Gastrocnemius medialis (tissue), 4 donors: ENCODE measurements at regions of chr2 and their contacts with region 1.

Region 1: DNA sequence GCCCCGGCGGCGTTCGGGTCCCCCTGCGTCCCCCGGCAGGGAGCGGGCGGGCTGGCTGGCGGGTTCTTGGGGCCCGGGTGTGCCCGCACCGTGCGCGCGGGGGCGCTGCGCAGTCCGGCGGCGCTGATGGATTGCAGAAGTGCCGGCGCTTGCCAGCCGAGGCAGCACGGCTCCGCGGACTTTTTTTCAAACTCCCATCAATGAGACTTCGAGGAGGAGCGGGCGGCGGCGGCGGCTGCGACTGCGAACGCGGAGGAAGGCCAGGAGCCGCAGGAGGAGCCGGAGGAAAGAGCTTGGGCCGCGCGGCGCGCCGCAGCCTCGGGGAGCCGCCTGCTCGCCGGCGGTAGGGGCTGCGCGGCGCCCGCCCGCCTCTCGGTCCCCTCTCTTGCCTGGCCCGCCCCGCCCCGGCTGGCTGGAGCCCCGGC is at the start of gene GLI2:
- DNase-seq: peak; percentile 44 to 51
- ATAC-seq: peak; percentile 78 to 82
- H3K4me3 ChIP-seq: peak within 1 kb of the TSS; percentile 51 to 60 (median 56)
- H3K27ac ChIP-seq: peak within 1 kb of the TSS; percentile 51 to 66 (median 60)
- H3K4me1 ChIP-seq: peaks cover 0 to 22% of the 10 kb centered on the region in 2 donors
- H3K27me3 ChIP-seq: peaks cover 54 to 56% (median 56%) of the 10 kb centered on the region in 3 donors
- CTCF ChIP-seq: peak; percentile 18 to 74 (median 51)
- POLR2A ChIP-seq: no peak
- total RNA-seq, gene GLI2: 0.27 to 0.49 (median 0.29) TPM

Region 2: GRCh38 chr2:118748245-118748885 is 1987.4 kb before region 1 on chr2:
- in situ Hi-C with region 1: no loop called
- intact Hi-C with region 1: loop called (anchors 10 kb)
- DNase-seq: no peak
- ATAC-seq: no peak
- H3K4me3 ChIP-seq: no peak overlapping the region
- H3K27ac ChIP-seq: no peak overlapping the region
- H3K4me1 ChIP-seq: no peaks in the 10 kb centered on the region
- H3K27me3 ChIP-seq: no peaks in the 10 kb centered on the region
- CTCF ChIP-seq: no peak
- POLR2A ChIP-seq: no peak

Region 3: DNA sequence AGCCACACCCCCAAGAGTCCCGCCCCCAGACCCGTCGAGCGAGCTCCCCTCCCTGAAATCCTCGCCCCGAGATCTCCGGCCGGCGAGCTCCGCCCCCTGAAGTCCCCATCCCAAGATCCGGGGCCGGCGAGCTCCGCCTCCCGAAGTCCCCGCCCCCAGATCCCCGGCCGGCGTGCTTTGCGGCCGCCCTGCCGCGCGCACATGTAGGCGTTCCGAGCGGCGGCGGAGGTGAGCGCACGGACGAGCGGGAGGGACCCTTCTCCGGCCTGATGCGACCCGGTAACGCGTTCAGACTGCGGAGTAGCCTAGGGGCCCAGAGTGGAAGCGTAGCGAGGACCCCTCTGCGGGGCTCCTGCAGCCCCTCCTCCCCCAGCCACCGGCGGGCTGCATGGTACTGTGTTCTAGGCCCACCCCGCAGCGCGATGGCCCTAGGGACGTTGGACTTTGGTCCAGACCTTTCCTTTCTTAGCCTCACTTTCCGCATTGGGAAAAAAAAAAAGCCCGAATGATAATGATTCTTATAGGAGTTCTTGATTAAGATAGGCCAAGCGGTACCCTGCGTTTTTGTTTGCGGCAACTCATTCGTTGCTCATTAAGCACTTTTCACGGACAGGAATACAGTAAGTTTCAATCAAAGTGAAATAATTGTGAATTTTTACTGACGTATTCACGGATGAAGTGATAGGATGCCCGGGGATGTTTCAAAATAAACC is 1056.6 kb before region 1 on chr2 and contains the start of gene TMEM177:
- in situ Hi-C with region 1: no loop called
- intact Hi-C with region 1: no loop called
- DNase-seq: peak; percentile 62 to 69
- ATAC-seq: peak; percentile 88 to 90
- H3K4me3 ChIP-seq: peak within 1 kb of the TSS; percentile 71 to 98 (median 91)
- H3K27ac ChIP-seq: peak within 1 kb of the TSS; percentile 39 to 80 (median 64)
- H3K4me1 ChIP-seq: peaks cover 7 to 8% of the 10 kb centered on the region in 2 donors
- H3K27me3 ChIP-seq: no peaks in the 10 kb centered on the region
- CTCF ChIP-seq: no peak
- POLR2A ChIP-seq: peak; percentile 30 to 49
- total RNA-seq, gene TMEM177: 5.1 to 13.4 (median 7.6) TPM

Region 4: GRCh38 chr2:120661551-120661950 is 74.2 kb before region 1 on chr2:
- in situ Hi-C with region 1: no loop called
- intact Hi-C with region 1: no loop called
- DNase-seq: peak in 1 of 2 donors; percentile 31
- ATAC-seq: no peak
- H3K4me3 ChIP-seq: no peak overlapping the region
- H3K27ac ChIP-seq: no peak overlapping the region
- H3K4me1 ChIP-seq: peaks cover 0 to 6% of the 10 kb centered on the region in 2 donors
- H3K27me3 ChIP-seq: peaks cover 0 to 6% (median 0%) of the 10 kb centered on the region in 3 donors
- CTCF ChIP-seq: no peak
- POLR2A ChIP-seq: no peak

Region 5: GRCh38 chr2:120802158-120802557 is 66.4 kb after region 1 on chr2:
- in situ Hi-C with region 1: no loop called
- intact Hi-C with region 1: no loop called
- DNase-seq: no peak
- ATAC-seq: no peak
- H3K4me3 ChIP-seq: no peak overlapping the region
- H3K27ac ChIP-seq: no peak overlapping the region
- H3K4me1 ChIP-seq: peaks cover 7 to 15% of the 10 kb centered on the region in 2 donors
- H3K27me3 ChIP-seq: no peaks in the 10 kb centered on the region
- CTCF ChIP-seq: no peak
- POLR2A ChIP-seq: no peak

Region 6: DNA sequence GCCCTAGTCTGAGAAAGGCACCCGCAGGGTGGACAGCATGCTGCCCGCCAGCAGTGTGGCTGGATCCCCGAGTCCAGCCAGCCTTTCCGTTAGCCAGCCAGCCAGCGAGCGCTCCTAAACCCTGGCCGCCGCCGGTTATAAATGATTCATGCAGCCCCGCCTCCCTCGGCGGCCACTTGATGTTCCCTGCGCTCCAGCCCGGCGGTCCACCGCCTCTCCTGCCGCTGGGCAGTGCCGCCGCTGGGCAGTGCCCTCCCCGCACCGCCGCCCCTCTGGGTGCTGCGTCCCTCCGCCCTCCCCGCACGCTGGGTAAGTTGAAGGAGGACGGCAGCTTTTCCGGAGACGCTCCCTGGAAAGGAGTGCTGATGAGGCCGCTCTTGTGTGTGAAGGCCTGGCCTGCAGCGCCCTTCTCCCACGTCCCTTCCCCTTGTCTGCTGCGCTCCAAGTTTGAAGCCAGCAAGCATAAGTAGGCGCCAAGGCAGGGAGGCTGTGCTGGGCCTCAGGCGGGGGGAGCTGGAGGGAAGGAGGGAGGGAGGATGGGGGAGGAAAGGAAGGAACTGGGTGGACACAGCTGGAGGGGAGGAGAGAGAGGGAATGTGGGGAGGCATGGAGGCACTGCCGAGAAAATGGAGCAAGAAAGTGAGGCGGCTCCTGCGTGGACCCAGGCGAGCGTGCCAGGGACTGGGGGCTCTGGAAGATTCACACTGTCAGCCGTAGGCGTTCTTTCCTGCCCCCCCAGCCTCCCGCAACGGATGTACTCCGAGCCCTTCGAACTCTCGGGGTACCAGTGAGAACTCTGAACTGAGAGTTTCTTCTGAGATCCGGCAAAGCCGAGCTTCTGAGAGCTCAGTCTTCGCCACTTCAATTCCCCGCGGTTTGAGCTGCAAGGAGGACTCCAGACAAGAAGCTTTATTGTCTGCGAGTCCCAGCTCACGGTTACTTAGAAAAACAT is 131.8 kb after region 1 on chr2:
- in situ Hi-C with region 1: no loop called
- intact Hi-C with region 1: loop called (anchors 10 kb)
- DNase-seq: peak; percentile 67 to 73
- ATAC-seq: peak; percentile 84 to 85
- H3K4me3 ChIP-seq: peak overlapping the region; percentile 46 to 66 (median 50)
- H3K27ac ChIP-seq: peak overlapping the region; percentile 69 to 81 (median 78)
- H3K4me1 ChIP-seq: peaks cover 4 to 16% of the 10 kb centered on the region in 2 donors
- H3K27me3 ChIP-seq: no peaks in the 10 kb centered on the region
- CTCF ChIP-seq: peak in 2 of 5 experiments; percentile 12 to 23
- POLR2A ChIP-seq: peak; percentile 11 to 32

Region 7: GRCh38 chr2:120879431-120880295 is 143.9 kb after region 1 on chr2:
- in situ Hi-C with region 1: no loop called
- intact Hi-C with region 1: no loop called
- DNase-seq: peak in 1 of 2 donors; percentile 61
- ATAC-seq: peak; percentile 53 to 66
- H3K4me3 ChIP-seq: peak overlapping the region in 1 of 4 donors; percentile 9
- H3K27ac ChIP-seq: peak overlapping the region in 3 of 4 donors; percentile 5 to 65 (median 20)
- H3K4me1 ChIP-seq: peaks cover 33 to 37% of the 10 kb centered on the region in 2 donors
- H3K27me3 ChIP-seq: no peaks in the 10 kb centered on the region
- CTCF ChIP-seq: peak in 3 of 5 experiments; percentile 28 to 53 (median 41)
- POLR2A ChIP-seq: no peak

Region 8: DNA sequence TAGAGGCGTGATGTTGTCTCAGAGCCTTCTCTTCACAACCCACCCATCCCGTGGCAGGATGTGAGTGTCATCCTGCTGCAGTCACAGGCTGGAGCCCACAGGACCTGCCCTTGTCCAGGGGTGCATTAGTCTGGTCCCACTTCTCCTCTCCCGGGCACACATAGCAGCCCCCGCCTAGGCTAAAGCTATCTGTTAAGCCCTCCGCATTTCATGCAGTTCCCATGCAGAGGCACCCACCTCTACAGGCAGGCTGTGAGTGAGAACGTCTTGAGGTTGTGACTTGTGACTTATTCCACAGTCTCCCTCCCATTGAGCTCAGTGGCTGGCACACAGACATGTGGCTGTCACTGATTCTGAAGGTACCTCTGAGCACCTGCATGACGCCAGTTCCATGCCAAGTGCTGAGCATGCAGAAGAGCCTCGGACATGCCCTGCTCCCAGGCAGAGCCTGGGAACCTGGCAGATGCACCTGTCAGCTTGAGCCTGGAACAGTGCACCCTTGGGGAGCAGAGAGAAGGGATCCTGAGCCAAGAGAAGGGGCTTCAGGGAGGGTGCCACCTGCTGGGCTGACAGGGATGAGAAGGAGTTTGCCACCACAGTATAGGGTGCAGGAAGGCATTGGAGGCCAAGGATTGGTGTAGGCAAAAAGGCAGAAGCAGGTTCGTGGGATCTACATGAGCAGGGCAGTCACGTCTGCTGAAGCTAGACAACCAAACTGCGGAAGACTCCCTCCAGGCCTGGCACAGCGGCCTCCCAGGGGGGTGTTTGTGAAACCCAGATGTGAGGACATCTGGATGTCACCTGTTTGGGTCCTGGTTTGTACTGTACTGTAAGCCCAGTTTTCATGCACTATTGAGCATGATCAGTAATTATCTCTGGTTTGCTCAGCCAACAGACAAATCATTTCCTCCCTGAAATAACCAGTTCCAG is 213.5 kb after region 1 on chr2:
- in situ Hi-C with region 1: no loop called
- intact Hi-C with region 1: loop called (anchors 5 kb)
- DNase-seq: no peak
- ATAC-seq: peak; percentile 31 to 48
- H3K4me3 ChIP-seq: no peak overlapping the region
- H3K27ac ChIP-seq: no peak overlapping the region
- H3K4me1 ChIP-seq: peaks cover 10 to 19% of the 10 kb centered on the region in 2 donors
- H3K27me3 ChIP-seq: no peaks in the 10 kb centered on the region
- CTCF ChIP-seq: peak in 3 of 5 experiments; percentile 17 to 48 (median 46)
- POLR2A ChIP-seq: no peak

Region 9: DNA sequence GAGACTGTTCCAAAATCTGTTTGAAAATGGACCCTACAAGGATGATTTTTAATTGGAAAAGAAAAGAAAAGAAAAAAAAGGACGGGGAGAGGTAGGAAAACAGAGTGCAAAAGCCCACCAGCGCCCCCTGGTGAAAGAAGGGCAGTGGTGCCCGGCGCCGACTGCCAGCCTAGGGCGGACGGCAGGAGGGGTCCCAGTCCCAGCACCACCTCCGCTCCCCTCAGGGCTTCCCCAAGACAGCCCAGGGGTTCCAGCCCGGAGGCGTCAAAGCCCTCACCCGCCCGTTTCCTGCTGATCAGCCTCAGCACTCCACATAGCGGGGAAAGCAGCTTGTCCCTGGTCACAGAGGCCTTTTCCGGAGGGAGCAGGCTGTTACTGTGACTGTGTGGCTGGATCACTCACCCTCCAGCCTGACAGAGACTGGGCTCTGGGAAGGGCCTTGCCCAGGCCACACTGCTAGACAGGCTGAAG is 335.3 kb after region 1 on chr2:
- in situ Hi-C with region 1: no loop called
- intact Hi-C with region 1: loop called (anchors 2 kb)
- DNase-seq: peak; percentile 32 to 40
- ATAC-seq: peak; percentile 24 to 64
- H3K4me3 ChIP-seq: no peak overlapping the region
- H3K27ac ChIP-seq: no peak overlapping the region
- H3K4me1 ChIP-seq: no peaks in the 10 kb centered on the region
- H3K27me3 ChIP-seq: peaks cover 7 to 16% (median 11%) of the 10 kb centered on the region in 3 donors
- CTCF ChIP-seq: peak; percentile 72 to 97 (median 93)
- POLR2A ChIP-seq: no peak